ENCODE measurements at regions of chr1 and their contacts with region 1.

Region 1: DNA sequence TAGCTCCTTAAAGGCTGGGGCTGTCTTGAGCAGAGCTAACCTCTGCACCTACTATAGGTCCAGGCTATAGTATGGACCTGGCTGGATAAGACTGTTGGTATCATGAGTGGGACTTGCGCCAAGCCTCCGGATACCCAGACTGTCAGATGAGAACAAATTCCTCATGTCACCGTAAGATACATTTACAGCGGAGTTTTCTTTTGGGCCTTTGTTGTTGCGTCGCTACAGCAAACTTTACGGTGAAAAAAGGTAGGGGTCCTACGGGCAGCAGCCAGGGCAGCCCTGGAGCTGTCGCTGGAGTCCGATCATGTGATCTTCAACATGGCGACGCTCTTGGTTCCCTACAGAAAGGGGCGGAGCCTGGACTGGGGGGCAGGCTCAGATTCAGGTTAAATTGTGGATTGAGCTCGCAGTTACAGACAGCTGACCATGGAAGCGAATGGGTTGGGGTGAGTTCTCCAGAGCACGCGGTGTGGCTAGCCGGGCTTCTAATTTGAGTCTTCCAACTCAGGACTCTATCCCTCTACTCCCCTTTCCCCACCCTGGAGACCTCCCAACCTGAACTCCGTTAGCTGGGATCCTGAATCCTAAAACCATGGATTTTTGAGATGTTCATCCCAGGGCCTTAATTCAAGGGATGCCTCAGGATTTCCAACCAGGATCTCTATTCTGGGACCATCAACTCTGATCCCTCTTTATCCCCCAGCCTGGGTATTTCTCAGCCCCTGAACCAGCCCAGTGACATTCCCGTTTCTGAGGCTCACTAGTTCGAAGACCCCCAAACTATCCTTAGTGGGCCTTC is at the start of gene UROD:
- DNase-seq: peak; percentile 92
- H3K4me3 ChIP-seq: peak within 1 kb of the TSS; percentile 92
- H3K27ac ChIP-seq: peak within 1 kb of the TSS; percentile 82
- H3K27me3 ChIP-seq: no peaks in the 10 kb centered on the region
- CTCF ChIP-seq: no peak
- polyA plus RNA-seq, gene UROD: 185 and 226 TPM in 2 replicates

Region 2: GRCh38 chr1:44380666-44381177 is 631.3 kb before region 1 on chr1:
- CTCF ChIA-PET with region 1: no interaction called
- POLR2A ChIA-PET with region 1: no interaction called
- DNase-seq: no peak
- H3K4me3 ChIP-seq: no peak overlapping the region
- H3K27ac ChIP-seq: no peak overlapping the region
- H3K27me3 ChIP-seq: peaks cover 34% of the 10 kb centered on the region
- CTCF ChIP-seq: no peak

Region 3: GRCh38 chr1:44730741-44731512 is 281.1 kb before region 1 on chr1 and contains the start of gene RNU5D-1:
- CTCF ChIA-PET with region 1: interaction called, 7 read pairs
- POLR2A ChIA-PET with region 1: interaction called, 13 read pairs
- DNase-seq: peak; percentile 94
- H3K4me3 ChIP-seq: peak within 1 kb of the TSS; percentile 17; the same call in 1 of the 2 replicates
- H3K27ac ChIP-seq: peak within 1 kb of the TSS; percentile 98
- H3K27me3 ChIP-seq: no peaks in the 10 kb centered on the region
- CTCF ChIP-seq: peak; percentile 82
- polyA plus RNA-seq, gene RNU5D-1: not detected in 2 replicates

Region 4: GRCh38 chr1:44835738-44836675 is 176.0 kb before region 1 on chr1:
- CTCF ChIA-PET with region 1: interaction called, 30 read pairs
- POLR2A ChIA-PET with region 1: interaction called, 3 read pairs
- DNase-seq: peak; percentile 57
- H3K4me3 ChIP-seq: no peak overlapping the region
- H3K27ac ChIP-seq: no peak overlapping the region
- H3K27me3 ChIP-seq: no peaks in the 10 kb centered on the region
- CTCF ChIP-seq: peak; percentile 91

Region 5: GRCh38 chr1:44985747-44986359 is 26.2 kb before region 1 on chr1:
- CTCF ChIA-PET with region 1: interaction called, 12 read pairs
- POLR2A ChIA-PET with region 1: interaction called, 18 read pairs
- DNase-seq: peak; percentile 4
- H3K4me3 ChIP-seq: peak overlapping the region; percentile 99
- H3K27ac ChIP-seq: peak overlapping the region; percentile 65
- H3K27me3 ChIP-seq: no peaks in the 10 kb centered on the region
- CTCF ChIP-seq: no peak

Region 6: GRCh38 chr1:45303582-45304310 is 291.7 kb after region 1 on chr1:
- CTCF ChIA-PET with region 1: interaction called, 616 read pairs
- POLR2A ChIA-PET with region 1: interaction called, 38 read pairs
- DNase-seq: peak; percentile 93
- H3K4me3 ChIP-seq: peak overlapping the region; percentile 78
- H3K27ac ChIP-seq: peak overlapping the region; percentile 86
- H3K27me3 ChIP-seq: no peaks in the 10 kb centered on the region
- CTCF ChIP-seq: peak; percentile 69

Region 7: GRCh38 chr1:45348716-45349677 is 337.0 kb after region 1 on chr1:
- CTCF ChIA-PET with region 1: interaction called, 22 read pairs
- POLR2A ChIA-PET with region 1: interaction called, 6 read pairs
- DNase-seq: no peak
- H3K4me3 ChIP-seq: no peak overlapping the region
- H3K27ac ChIP-seq: no peak overlapping the region
- H3K27me3 ChIP-seq: no peaks in the 10 kb centered on the region
- CTCF ChIP-seq: no peak

Region 8: DNA sequence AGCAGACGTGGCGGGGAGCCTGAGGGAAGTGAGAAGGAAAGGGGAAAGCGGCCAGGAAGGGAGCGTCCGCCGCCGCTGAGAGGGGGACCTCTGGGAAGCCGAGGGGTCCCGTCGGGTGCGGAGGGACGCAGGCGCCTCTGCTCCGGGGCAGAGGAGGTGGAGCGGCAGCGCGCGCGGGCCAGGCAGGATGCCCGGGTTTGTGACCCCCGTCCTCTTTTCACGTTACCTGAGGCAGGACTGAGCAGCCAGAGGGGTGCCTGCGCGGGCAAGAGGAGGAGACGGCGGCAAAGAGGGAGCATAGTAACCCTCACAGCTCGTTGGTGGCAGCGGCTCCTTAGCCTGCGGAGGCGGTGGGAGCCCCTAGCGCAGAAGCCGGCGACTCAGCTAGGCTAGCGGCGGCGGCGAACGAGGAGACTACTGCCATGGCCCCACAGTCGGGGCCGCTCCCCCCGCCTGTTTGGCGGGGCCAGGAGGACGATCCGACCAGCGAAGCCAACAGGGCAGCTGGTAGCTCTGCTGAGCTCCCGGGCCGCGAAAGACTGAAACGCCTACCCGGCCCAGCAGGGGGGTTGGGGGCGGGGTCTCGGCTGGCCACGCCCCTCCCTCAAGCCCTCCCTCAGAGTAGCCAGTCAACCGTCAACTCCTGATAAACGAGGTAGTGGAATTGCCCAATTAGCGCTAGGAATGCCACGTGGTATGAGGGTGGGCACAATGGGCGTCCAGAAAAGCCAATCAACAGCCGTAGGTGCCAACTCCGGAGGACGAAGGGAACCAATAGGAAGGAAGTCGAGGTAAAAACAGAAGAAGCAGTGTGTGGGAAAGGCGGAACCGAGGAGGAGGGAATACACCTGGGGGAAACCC is 478.8 kb after region 1 on chr1 and contains the start of gene TESK2:
- CTCF ChIA-PET with region 1: interaction called, 78 read pairs
- POLR2A ChIA-PET with region 1: interaction called, 4 read pairs
- DNase-seq: peak; percentile 98
- H3K4me3 ChIP-seq: peak within 1 kb of the TSS; percentile 85
- H3K27ac ChIP-seq: peak within 1 kb of the TSS; percentile 47
- H3K27me3 ChIP-seq: no peaks in the 10 kb centered on the region
- CTCF ChIP-seq: no peak
- polyA plus RNA-seq, gene TESK2: 2.5 and 2.6 TPM in 2 replicates

Measured in AG04450 (cell line).